T-cell (primary cell): ENCODE measurements at regions of chr9 and their contacts with region 1.

Region 1: DNA sequence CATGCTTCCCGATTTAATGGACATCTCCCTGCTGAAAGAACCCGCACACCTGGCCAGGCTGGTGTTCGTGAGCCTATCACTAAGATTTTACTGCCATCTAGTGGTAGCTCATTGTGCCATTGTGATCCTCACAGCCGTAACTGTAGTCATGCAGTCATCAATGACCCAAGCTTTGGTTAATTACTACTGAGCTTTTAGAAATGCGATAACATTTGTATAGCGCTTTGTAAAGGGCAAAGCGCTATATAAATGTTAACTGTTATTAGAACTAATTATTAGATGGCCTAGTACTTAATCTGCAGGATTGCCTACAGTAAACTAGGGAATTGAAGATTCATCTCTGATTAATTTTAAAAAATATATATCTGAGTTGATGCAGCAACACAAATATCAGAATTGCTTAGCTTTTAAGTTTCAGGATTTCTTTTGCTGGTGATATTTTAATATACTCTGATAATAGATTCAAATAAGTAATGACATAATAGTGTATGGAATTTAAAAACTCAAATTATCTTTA is 90.2 kb downstream of the HACD4 start:
- DNase-seq: peak in 34 of 35 experiments; percentile 4 to 83 (median 30)
- ATAC-seq: peak; percentile 85 to 95 (median 89)
- H3K4me3 ChIP-seq: no peak overlapping the region
- H3K4me3 Mint-ChIP-seq: no peak overlapping the region
- H3K27ac ChIP-seq: no peak overlapping the region
- H3K27ac Mint-ChIP-seq: no peak overlapping the region
- H3K4me1 ChIP-seq: no peaks in the 10 kb centered on the region
- H3K4me1 Mint-ChIP-seq: peaks cover 4 to 5% (median 4%) of the 10 kb centered on the region in 3 donors
- H3K27me3 ChIP-seq: no peaks in the 10 kb centered on the region
- H3K27me3 Mint-ChIP-seq: no peaks in the 10 kb centered on the region

Region 2: DNA sequence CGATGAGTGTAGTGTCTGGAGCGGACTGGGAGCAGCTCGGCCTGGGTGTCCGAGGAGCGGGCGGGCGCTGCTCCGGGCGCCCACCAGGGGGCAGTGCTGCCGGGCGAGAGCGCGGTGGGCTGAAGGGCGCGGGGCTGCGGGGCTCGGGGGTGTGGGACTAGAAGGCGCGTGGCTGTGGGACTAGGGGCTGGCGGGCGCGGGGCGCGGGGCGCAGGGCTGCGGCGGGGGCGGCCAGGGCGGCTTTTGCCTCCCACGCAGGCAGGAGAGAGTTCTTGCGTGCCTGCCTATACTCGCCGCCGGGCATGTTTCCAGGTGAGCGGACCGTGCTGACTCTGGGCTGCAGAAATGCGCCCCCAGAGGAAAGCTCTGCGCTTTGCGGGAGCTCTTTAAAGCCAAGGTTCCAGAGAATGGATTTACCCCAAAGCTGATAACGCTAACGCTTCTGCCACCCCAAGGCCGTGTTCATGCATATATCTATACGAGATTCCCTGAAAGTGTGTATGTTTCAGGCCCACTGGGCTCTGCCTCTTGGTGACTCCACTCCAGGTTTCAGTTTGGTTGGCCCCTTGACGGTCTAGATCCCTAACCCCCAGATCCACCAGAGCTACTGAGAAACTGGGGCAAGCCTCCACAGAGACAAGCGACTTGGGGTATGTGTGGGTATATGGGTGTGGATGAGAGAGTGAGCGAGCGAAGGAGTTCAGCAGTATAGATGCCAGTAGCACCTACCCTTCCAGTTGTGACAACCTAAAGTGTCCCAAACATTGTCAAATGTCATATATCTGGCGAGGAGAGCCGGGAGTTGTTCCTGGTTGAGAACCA is 1476.3 kb before region 1 on chr9:
- CTCF ChIA-PET with region 1: interaction called, 5 to 17 read pairs
- POLR2A ChIA-PET with region 1: no interaction called
- DNase-seq: peak; percentile 37 to 80 (median 66)
- ATAC-seq: peak; percentile 93
- H3K4me3 ChIP-seq: peak overlapping the region; percentile 26 to 35
- H3K4me3 Mint-ChIP-seq: peak overlapping the region; percentile 77 to 87 (median 79)
- H3K27ac ChIP-seq: no peak overlapping the region
- H3K27ac Mint-ChIP-seq: no peak overlapping the region
- H3K4me1 ChIP-seq: peaks cover 0 to 11% of the 10 kb centered on the region in 2 experiments
- H3K4me1 Mint-ChIP-seq: peaks cover 5 to 15% (median 11%) of the 10 kb centered on the region in 3 donors
- H3K27me3 ChIP-seq: peaks cover 0 to 4% of the 10 kb centered on the region in 2 experiments
- H3K27me3 Mint-ChIP-seq: no peaks in the 10 kb centered on the region

Region 3: GRCh38 chr9:19925817-19926503 is 1015.3 kb before region 1 on chr9:
- CTCF ChIA-PET with region 1: interaction called, 9 to 61 read pairs
- POLR2A ChIA-PET with region 1: no interaction called
- DNase-seq: peak; percentile 55 to 89 (median 73)
- ATAC-seq: peak; percentile 95 to 99 (median 98)
- H3K4me3 ChIP-seq: no peak overlapping the region
- H3K4me3 Mint-ChIP-seq: peak overlapping the region; percentile 63 to 78 (median 65)
- H3K27ac ChIP-seq: no peak overlapping the region
- H3K27ac Mint-ChIP-seq: no peak overlapping the region
- H3K4me1 ChIP-seq: peaks cover 0 to 7% of the 10 kb centered on the region in 2 experiments
- H3K4me1 Mint-ChIP-seq: peaks cover 8 to 22% (median 9%) of the 10 kb centered on the region in 3 donors
- H3K27me3 ChIP-seq: peaks cover 2% of the 10 kb centered on the region in 2 experiments
- H3K27me3 Mint-ChIP-seq: peaks cover 3 to 5% of the 10 kb centered on the region in 2 donors

Region 4: DNA sequence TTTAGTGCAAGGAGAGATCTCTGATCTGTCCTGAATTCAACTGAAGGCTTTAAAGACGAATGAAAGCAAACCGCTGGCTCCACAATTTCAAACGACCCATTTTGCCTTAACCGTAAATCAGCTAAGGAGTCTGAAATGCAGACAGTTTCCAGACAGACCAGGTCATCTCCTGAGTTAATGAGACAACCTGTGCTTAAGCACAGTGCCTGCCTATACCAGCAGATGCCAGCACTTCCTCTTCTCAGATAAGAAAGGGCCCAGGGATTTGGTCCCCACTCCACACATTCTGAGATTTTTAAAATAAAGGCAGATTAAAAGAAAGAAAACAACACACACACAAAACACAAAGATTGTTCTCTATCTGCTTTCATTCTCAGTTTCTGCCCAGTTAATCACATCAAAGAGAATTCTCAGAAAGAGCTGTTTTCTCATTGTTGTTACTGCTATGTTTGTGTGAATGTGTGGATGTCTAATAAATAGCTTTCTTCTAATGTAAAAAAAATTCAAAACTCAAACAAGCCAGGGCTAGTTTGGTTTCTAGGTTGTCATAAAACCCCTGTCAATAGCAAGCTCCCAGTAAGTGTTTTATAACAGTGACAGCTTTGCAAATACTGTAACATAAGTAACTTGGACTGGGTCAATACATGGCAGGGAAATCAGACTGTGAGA is 994.7 kb before region 1 on chr9:
- CTCF ChIA-PET with region 1: interaction called, 4 to 11 read pairs
- POLR2A ChIA-PET with region 1: no interaction called
- DNase-seq: peak in 1 of 35 experiments; percentile 15
- ATAC-seq: peak in 3 of 4 experiments; percentile 56 to 70 (median 69)
- H3K4me3 ChIP-seq: no peak overlapping the region
- H3K4me3 Mint-ChIP-seq: no peak overlapping the region
- H3K27ac ChIP-seq: no peak overlapping the region
- H3K27ac Mint-ChIP-seq: no peak overlapping the region
- H3K4me1 ChIP-seq: no peaks in the 10 kb centered on the region
- H3K4me1 Mint-ChIP-seq: peaks cover 5 to 14% (median 8%) of the 10 kb centered on the region in 3 donors
- H3K27me3 ChIP-seq: no peaks in the 10 kb centered on the region
- H3K27me3 Mint-ChIP-seq: peaks cover 5% of the 10 kb centered on the region in 2 donors

Region 5: GRCh38 chr9:20356403-20357035 is 584.7 kb before region 1 on chr9:
- CTCF ChIA-PET with region 1: interaction called, 6 to 12 read pairs
- POLR2A ChIA-PET with region 1: no interaction called
- DNase-seq: peak in 34 of 35 experiments; percentile 14 to 73 (median 48)
- ATAC-seq: peak; percentile 65 to 80 (median 67)
- H3K4me3 ChIP-seq: no peak overlapping the region
- H3K4me3 Mint-ChIP-seq: peak overlapping the region in 1 of 3 donors; percentile 50
- H3K27ac ChIP-seq: no peak overlapping the region
- H3K27ac Mint-ChIP-seq: peak overlapping the region; percentile 78 to 79
- H3K4me1 ChIP-seq: peaks cover 5 to 14% of the 10 kb centered on the region in 2 experiments
- H3K4me1 Mint-ChIP-seq: peaks cover 47 to 57% (median 51%) of the 10 kb centered on the region in 3 donors
- H3K27me3 ChIP-seq: no peaks in the 10 kb centered on the region
- H3K27me3 Mint-ChIP-seq: no peaks in the 10 kb centered on the region

Region 6: GRCh38 chr9:20622330-20623020 is 318.8 kb before region 1 on chr9 and contains the start of gene MLLT3:
- CTCF ChIA-PET with region 1: interaction called, 3 to 15 read pairs
- POLR2A ChIA-PET with region 1: no interaction called
- DNase-seq: peak; percentile 92 to 99 (median 97)
- ATAC-seq: peak; percentile 76 to 83 (median 78)
- H3K4me3 ChIP-seq: peak within 1 kb of the TSS; percentile 91 to 95
- H3K4me3 Mint-ChIP-seq: peak within 1 kb of the TSS; percentile 96 to 99 (median 98)
- H3K27ac ChIP-seq: peak within 1 kb of the TSS; percentile 82
- H3K27ac Mint-ChIP-seq: peak within 1 kb of the TSS; percentile 97 to 99
- H3K4me1 ChIP-seq: peaks cover 19 to 34% of the 10 kb centered on the region in 2 experiments
- H3K4me1 Mint-ChIP-seq: peaks cover 43 to 48% (median 45%) of the 10 kb centered on the region in 3 donors
- H3K27me3 ChIP-seq: no peaks in the 10 kb centered on the region
- H3K27me3 Mint-ChIP-seq: no peaks in the 10 kb centered on the region
- total RNA-seq, gene MLLT3: 51.8 to 96.6 (median 58.9) TPM

Region 7: GRCh38 chr9:20693068-20693467 is 248.2 kb before region 1 on chr9:
- CTCF ChIA-PET with region 1: no interaction called
- POLR2A ChIA-PET with region 1: no interaction called
- DNase-seq: no peak
- ATAC-seq: no peak
- H3K4me3 ChIP-seq: no peak overlapping the region
- H3K4me3 Mint-ChIP-seq: no peak overlapping the region
- H3K27ac ChIP-seq: no peak overlapping the region
- H3K27ac Mint-ChIP-seq: no peak overlapping the region
- H3K4me1 ChIP-seq: no peaks in the 10 kb centered on the region
- H3K4me1 Mint-ChIP-seq: peaks cover 0 to 12% (median 3%) of the 10 kb centered on the region in 3 donors
- H3K27me3 ChIP-seq: no peaks in the 10 kb centered on the region
- H3K27me3 Mint-ChIP-seq: no peaks in the 10 kb centered on the region

Region 8: GRCh38 chr9:22548625-22549024 is 1607.4 kb after region 1 on chr9:
- CTCF ChIA-PET with region 1: no interaction called
- POLR2A ChIA-PET with region 1: no interaction called
- DNase-seq: no peak
- ATAC-seq: no peak
- H3K4me3 ChIP-seq: no peak overlapping the region
- H3K4me3 Mint-ChIP-seq: no peak overlapping the region
- H3K27ac ChIP-seq: no peak overlapping the region
- H3K27ac Mint-ChIP-seq: no peak overlapping the region
- H3K4me1 ChIP-seq: no peaks in the 10 kb centered on the region
- H3K4me1 Mint-ChIP-seq: no peaks in the 10 kb centered on the region
- H3K27me3 ChIP-seq: no peaks in the 10 kb centered on the region
- H3K27me3 Mint-ChIP-seq: no peaks in the 10 kb centered on the region